Calu3 (cell line): ENCODE measurements at regions of chr3 and their contacts with region 1.

Region 1: DNA sequence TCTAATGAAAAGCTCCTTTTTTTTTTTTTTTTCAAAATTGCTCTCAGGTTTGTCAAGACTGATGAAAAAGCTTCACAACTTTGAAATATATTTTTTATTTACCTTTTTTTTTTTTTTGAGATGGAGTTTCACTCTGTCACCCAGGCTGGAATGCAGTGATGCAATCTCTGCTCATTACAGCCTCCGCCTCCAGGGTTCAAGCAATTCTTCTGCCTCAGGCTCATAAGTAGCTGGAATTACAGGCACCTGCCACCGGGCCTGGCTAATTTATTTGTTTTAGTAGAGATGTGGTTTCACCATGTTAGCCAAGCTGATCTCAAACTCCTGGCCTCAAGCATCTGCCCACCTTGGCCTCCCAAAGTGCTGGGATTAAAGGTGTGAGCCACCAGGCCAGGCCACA is 1515.0 kb downstream of the OTOL1 start:
- DNase-seq: no peak
- H3K4me3 Mint-ChIP-seq: no peak overlapping the region
- H3K27ac Mint-ChIP-seq: no peak overlapping the region
- H3K4me1 Mint-ChIP-seq: no peaks in the 10 kb centered on the region
- H3K27me3 Mint-ChIP-seq: no peaks in the 10 kb centered on the region
- CTCF ChIP-seq: no peak

Region 2: GRCh38 chr3:162998205-162998604 is 13.4 kb before region 1 on chr3:
- CTCF ChIA-PET with region 1: interaction called, 5 read pairs
- intact Hi-C with region 1: loop called (anchors 1 kb)
- DNase-seq: no peak
- H3K4me3 Mint-ChIP-seq: no peak overlapping the region
- H3K27ac Mint-ChIP-seq: no peak overlapping the region
- H3K4me1 Mint-ChIP-seq: peaks cover 8% of the 10 kb centered on the region
- H3K27me3 Mint-ChIP-seq: no peaks in the 10 kb centered on the region
- CTCF ChIP-seq: no peak

Region 3: DNA sequence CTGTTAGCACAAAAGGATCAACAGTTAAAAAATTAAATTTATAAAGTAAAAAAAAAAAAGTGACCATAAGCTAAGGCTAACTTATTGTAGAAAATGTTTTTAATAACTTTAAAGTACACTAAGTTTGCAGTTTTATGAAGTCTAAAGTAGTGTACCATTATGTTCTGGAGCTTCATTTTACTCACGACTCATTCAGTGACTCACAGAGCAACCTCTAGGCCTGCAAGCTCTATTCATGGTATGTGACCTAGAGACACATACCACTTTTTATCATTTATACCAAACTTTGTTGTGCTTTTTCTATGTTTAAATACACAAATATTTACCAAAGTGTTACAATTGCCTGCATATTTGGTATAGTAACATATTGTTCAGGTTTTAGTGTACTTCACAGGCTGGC is 37.3 kb after region 1 on chr3:
- CTCF ChIA-PET with region 1: no interaction called
- intact Hi-C with region 1: no loop called
- DNase-seq: no peak
- H3K4me3 Mint-ChIP-seq: no peak overlapping the region
- H3K27ac Mint-ChIP-seq: no peak overlapping the region
- H3K4me1 Mint-ChIP-seq: no peaks in the 10 kb centered on the region
- H3K27me3 Mint-ChIP-seq: no peaks in the 10 kb centered on the region
- CTCF ChIP-seq: no peak